CD4-positive, alpha-beta memory T cell (primary cell): ENCODE measurements at regions of chr5 and their contacts with region 1.

Region 1: GRCh38 chr5:69083412-69083811 is 10.4 kb upstream of the SLC30A5 start:
- DNase-seq: no peak
- H3K4me3 ChIP-seq: no peak overlapping the region
- H3K4me3 Mint-ChIP-seq: no peak overlapping the region
- H3K27ac ChIP-seq: no peak overlapping the region
- H3K27ac Mint-ChIP-seq: no peak overlapping the region
- H3K4me1 ChIP-seq: no peaks in the 10 kb centered on the region
- H3K4me1 Mint-ChIP-seq: peaks cover 0 to 8% (median 3%) of the 10 kb centered on the region in 4 donors
- H3K27me3 ChIP-seq: no peaks in the 10 kb centered on the region
- H3K27me3 Mint-ChIP-seq: peaks cover 1% of the 10 kb centered on the region in 2 donors

Region 2: GRCh38 chr5:69099302-69099701 is 15.9 kb after region 1 on chr5:
- CTCF ChIA-PET with region 1: no interaction called
- POLR2A ChIA-PET with region 1: no interaction called
- intact Hi-C with region 1: no loop called
- DNase-seq: no peak
- H3K4me3 ChIP-seq: no peak overlapping the region
- H3K4me3 Mint-ChIP-seq: no peak overlapping the region
- H3K27ac ChIP-seq: no peak overlapping the region
- H3K27ac Mint-ChIP-seq: peak overlapping the region in 3 of 7 donors; percentile 30 to 59 (median 48)
- H3K4me1 ChIP-seq: peaks cover 44% of the 10 kb centered on the region
- H3K4me1 Mint-ChIP-seq: peaks cover 22 to 56% (median 40%) of the 10 kb centered on the region in 4 donors
- H3K27me3 ChIP-seq: no peaks in the 10 kb centered on the region
- H3K27me3 Mint-ChIP-seq: no peaks in the 10 kb centered on the region

Region 3: DNA sequence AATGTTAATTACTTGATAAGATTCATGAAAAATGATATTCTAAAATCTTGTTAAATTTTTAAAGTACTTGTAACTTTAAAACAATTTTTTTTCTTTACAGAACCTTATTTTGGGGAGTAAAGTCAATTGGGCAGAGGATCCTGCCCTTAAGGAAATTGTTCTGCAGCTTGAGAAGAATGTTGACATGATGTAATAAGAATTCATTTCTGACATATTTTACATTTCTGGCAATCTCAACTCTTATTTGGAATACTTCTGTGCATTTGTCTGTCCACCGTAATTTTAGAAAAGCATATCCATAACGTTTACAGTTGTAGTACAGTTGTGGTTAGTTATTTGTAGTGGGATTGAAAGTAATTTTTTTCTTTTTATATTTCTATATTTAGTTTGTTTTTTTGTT is 126.2 kb after region 1 on chr5:
- CTCF ChIA-PET with region 1: no interaction called
- POLR2A ChIA-PET with region 1: no interaction called
- intact Hi-C with region 1: loop called (anchors 2 kb)
- DNase-seq: no peak
- H3K4me3 ChIP-seq: no peak overlapping the region
- H3K4me3 Mint-ChIP-seq: no peak overlapping the region
- H3K27ac ChIP-seq: no peak overlapping the region
- H3K27ac Mint-ChIP-seq: no peak overlapping the region
- H3K4me1 ChIP-seq: no peaks in the 10 kb centered on the region
- H3K4me1 Mint-ChIP-seq: peaks cover 0 to 2% (median under 1%) of the 10 kb centered on the region in 4 donors
- H3K27me3 ChIP-seq: no peaks in the 10 kb centered on the region
- H3K27me3 Mint-ChIP-seq: no peaks in the 10 kb centered on the region

Region 4: GRCh38 chr5:69261034-69261433 is 177.6 kb after region 1 on chr5:
- CTCF ChIA-PET with region 1: no interaction called
- POLR2A ChIA-PET with region 1: no interaction called
- intact Hi-C with region 1: no loop called
- DNase-seq: no peak
- H3K4me3 ChIP-seq: no peak overlapping the region
- H3K4me3 Mint-ChIP-seq: no peak overlapping the region
- H3K27ac ChIP-seq: no peak overlapping the region
- H3K27ac Mint-ChIP-seq: peak overlapping the region in 1 of 7 donors; percentile 67
- H3K4me1 ChIP-seq: no peaks in the 10 kb centered on the region
- H3K4me1 Mint-ChIP-seq: peaks cover 0 to 2% (median 0%) of the 10 kb centered on the region in 4 donors
- H3K27me3 ChIP-seq: no peaks in the 10 kb centered on the region
- H3K27me3 Mint-ChIP-seq: no peaks in the 10 kb centered on the region